ENCODE measurements at regions of chr1 and their contacts with region 1.

Region 1: GRCh38 chr1:75908717-75909152 is 23.5 kb downstream of the ASB17 start:
- DNase-seq: peak; percentile 9 to 55
- H3K4me3 ChIP-seq: no peak overlapping the region
- H3K27ac ChIP-seq: no peak overlapping the region
- H3K4me1 ChIP-seq: peaks cover 0 to 3% (median 0%) of the 10 kb centered on the region in 4 experiments; a peak in 2 of 7 replicates
- H3K27me3 ChIP-seq: no peaks in the 10 kb centered on the region
- CTCF ChIP-seq: peak in 2 of 3 experiments; percentile 75 to 80; a peak in 3 of 4 replicates
- EP300 ChIP-seq: no peak
- POLR2A ChIP-seq: no peak
- RAD21 ChIP-seq: peak; percentile 92 to 96

Region 2: DNA sequence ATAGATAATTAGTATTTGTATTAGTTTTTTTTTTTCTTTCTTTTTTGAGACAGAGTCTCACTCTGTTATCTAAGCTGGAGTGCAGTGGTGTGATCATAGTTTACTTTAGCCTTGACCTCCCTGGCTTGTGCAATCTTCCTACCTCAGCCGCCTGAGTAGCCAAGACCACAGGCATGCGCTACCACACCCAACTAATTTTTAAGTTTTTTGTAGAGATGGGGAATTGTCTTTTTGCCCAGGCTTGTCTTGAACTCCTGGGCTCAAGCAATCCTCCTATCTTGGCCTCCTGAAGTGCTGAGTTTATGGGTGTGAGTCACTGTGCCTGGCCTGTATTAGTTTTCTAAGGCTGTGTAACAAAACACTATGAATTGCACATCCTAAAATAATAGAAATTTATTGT is 53.7 kb before region 1 on chr1:
- CTCF ChIA-PET with region 1: no interaction called
- POLR2A ChIA-PET with region 1: no interaction called
- DNase-seq: no peak
- H3K4me3 ChIP-seq: no peak overlapping the region
- H3K27ac ChIP-seq: no peak overlapping the region
- H3K4me1 ChIP-seq: no peaks in the 10 kb centered on the region
- H3K27me3 ChIP-seq: no peaks in the 10 kb centered on the region
- CTCF ChIP-seq: no peak
- EP300 ChIP-seq: no peak
- POLR2A ChIP-seq: no peak
- RAD21 ChIP-seq: no peak

Region 3: GRCh38 chr1:75870951-75871350 is 37.8 kb before region 1 on chr1:
- CTCF ChIA-PET with region 1: no interaction called
- POLR2A ChIA-PET with region 1: no interaction called
- DNase-seq: no peak
- H3K4me3 ChIP-seq: no peak overlapping the region
- H3K27ac ChIP-seq: no peak overlapping the region
- H3K4me1 ChIP-seq: peaks cover 0 to 3% (median 0%) of the 10 kb centered on the region in 4 experiments; a peak in 1 of 7 replicates
- H3K27me3 ChIP-seq: no peaks in the 10 kb centered on the region
- CTCF ChIP-seq: no peak
- EP300 ChIP-seq: no peak
- POLR2A ChIP-seq: no peak
- RAD21 ChIP-seq: no peak

Region 4: GRCh38 chr1:75922698-75923097 is 14.0 kb after region 1 on chr1:
- CTCF ChIA-PET with region 1: interaction called, 12 read pairs
- POLR2A ChIA-PET with region 1: no interaction called
- DNase-seq: no peak
- H3K4me3 ChIP-seq: no peak overlapping the region
- H3K27ac ChIP-seq: no peak overlapping the region
- H3K4me1 ChIP-seq: no peaks in the 10 kb centered on the region
- H3K27me3 ChIP-seq: no peaks in the 10 kb centered on the region
- CTCF ChIP-seq: no peak
- EP300 ChIP-seq: no peak
- POLR2A ChIP-seq: no peak
- RAD21 ChIP-seq: no peak

Measured in H1 (cell line).